ENCODE measurements at regions of chr20 and their contacts with region 1.

Region 1: GRCh38 chr20:22729180-22729579 is 144.8 kb upstream of the FOXA2 start:
- DNase-seq: peak; percentile 35
- H3K4me3 ChIP-seq: no peak overlapping the region
- H3K27ac ChIP-seq: no peak overlapping the region
- H3K4me1 ChIP-seq: peaks cover 13% of the 10 kb centered on the region
- H3K27me3 ChIP-seq: no peaks in the 10 kb centered on the region
- CTCF ChIP-seq: no peak

Region 2: GRCh38 chr20:22805219-22805618 is 76.0 kb after region 1 on chr20:
- CTCF ChIA-PET with region 1: no interaction called
- dilution Hi-C with region 1: no loop called
- in situ Hi-C with region 1: no loop called
- intact Hi-C with region 1: loop called (anchors 10 kb)
- DNase-seq: peak; percentile 89
- H3K4me3 ChIP-seq: no peak overlapping the region
- H3K27ac ChIP-seq: no peak overlapping the region
- H3K4me1 ChIP-seq: peaks cover 10% of the 10 kb centered on the region
- H3K27me3 ChIP-seq: no peaks in the 10 kb centered on the region
- CTCF ChIP-seq: no peak

Region 3: GRCh38 chr20:22846863-22847262 is 117.7 kb after region 1 on chr20:
- CTCF ChIA-PET with region 1: no interaction called
- dilution Hi-C with region 1: no loop called
- in situ Hi-C with region 1: no loop called
- intact Hi-C with region 1: loop called (anchors 5 kb)
- DNase-seq: no peak
- H3K4me3 ChIP-seq: no peak overlapping the region
- H3K27ac ChIP-seq: no peak overlapping the region
- H3K4me1 ChIP-seq: no peaks in the 10 kb centered on the region
- H3K27me3 ChIP-seq: no peaks in the 10 kb centered on the region
- CTCF ChIP-seq: no peak

Region 4: DNA sequence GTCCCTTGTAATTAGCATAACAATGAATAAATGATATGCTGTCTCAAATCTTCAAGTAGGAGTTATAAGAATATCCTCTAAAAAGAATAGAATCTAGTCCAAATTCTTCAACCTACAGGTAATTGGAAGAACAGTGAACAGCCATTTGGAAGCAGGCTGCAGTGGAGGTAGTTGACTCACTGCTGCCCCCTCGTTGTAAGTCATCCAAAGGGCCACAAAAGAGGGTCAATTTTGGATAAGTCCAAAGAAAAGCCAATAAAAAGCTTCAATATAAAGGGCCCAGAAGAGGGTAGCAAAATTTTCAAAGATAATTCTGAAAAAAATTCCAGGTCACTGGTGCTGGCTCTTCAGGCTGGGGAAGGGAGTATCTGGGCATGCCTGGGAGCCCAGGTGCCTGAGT is 245.2 kb after region 1 on chr20:
- CTCF ChIA-PET with region 1: no interaction called
- dilution Hi-C with region 1: no loop called
- in situ Hi-C with region 1: no loop called
- intact Hi-C with region 1: loop called (anchors 1 kb)
- DNase-seq: peak; percentile 20
- H3K4me3 ChIP-seq: no peak overlapping the region
- H3K27ac ChIP-seq: no peak overlapping the region
- H3K4me1 ChIP-seq: peaks cover 4% of the 10 kb centered on the region
- H3K27me3 ChIP-seq: no peaks in the 10 kb centered on the region
- CTCF ChIP-seq: peak; percentile 55 to 69

Region 5: GRCh38 chr20:23340524-23340923 is 611.3 kb after region 1 on chr20:
- CTCF ChIA-PET with region 1: no interaction called
- dilution Hi-C with region 1: no loop called
- in situ Hi-C with region 1: no loop called
- intact Hi-C with region 1: loop called (anchors 1 kb)
- DNase-seq: peak; percentile 49
- H3K4me3 ChIP-seq: no peak overlapping the region
- H3K27ac ChIP-seq: no peak overlapping the region
- H3K4me1 ChIP-seq: no peaks in the 10 kb centered on the region
- H3K27me3 ChIP-seq: no peaks in the 10 kb centered on the region
- CTCF ChIP-seq: peak; percentile 39 to 56